ENCODE measurements at regions of chr4 and their contacts with region 1.

Region 1: GRCh38 chr4:98113012-98113411 is 30.3 kb downstream of the STPG2 start:
- DNase-seq: peak; percentile 17
- H3K4me3 ChIP-seq: no peak overlapping the region
- H3K27ac ChIP-seq: no peak overlapping the region
- H3K4me1 ChIP-seq: no peaks in the 10 kb centered on the region
- H3K27me3 ChIP-seq: peaks cover 3% of the 10 kb centered on the region
- CTCF ChIP-seq: peak; percentile 42 to 56

Region 2: DNA sequence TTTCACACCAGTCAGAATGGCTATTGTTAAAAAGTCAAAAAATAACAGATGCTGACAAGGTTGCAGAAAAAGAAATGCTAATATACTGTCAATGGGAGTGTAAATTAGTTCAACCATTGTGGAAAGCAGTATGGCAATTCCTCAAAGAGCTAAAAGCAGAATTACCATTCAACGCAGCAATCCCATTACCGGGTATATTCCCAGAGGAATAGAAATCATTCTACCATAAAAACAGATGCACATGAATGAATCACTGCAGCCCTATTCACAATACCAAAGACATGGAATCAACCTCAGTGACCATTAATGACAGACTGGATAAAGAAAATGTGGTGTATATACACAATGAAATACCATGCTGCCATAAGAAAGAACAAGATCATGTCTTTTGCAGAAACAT is 212.8 kb before region 1 on chr4:
- CTCF ChIA-PET with region 1: no interaction called
- dilution Hi-C with region 1: no loop called
- in situ Hi-C with region 1: no loop called
- intact Hi-C with region 1: no loop called
- DNase-seq: no peak
- H3K4me3 ChIP-seq: no peak overlapping the region
- H3K27ac ChIP-seq: no peak overlapping the region
- H3K4me1 ChIP-seq: no peaks in the 10 kb centered on the region
- H3K27me3 ChIP-seq: no peaks in the 10 kb centered on the region
- CTCF ChIP-seq: no peak

Region 3: DNA sequence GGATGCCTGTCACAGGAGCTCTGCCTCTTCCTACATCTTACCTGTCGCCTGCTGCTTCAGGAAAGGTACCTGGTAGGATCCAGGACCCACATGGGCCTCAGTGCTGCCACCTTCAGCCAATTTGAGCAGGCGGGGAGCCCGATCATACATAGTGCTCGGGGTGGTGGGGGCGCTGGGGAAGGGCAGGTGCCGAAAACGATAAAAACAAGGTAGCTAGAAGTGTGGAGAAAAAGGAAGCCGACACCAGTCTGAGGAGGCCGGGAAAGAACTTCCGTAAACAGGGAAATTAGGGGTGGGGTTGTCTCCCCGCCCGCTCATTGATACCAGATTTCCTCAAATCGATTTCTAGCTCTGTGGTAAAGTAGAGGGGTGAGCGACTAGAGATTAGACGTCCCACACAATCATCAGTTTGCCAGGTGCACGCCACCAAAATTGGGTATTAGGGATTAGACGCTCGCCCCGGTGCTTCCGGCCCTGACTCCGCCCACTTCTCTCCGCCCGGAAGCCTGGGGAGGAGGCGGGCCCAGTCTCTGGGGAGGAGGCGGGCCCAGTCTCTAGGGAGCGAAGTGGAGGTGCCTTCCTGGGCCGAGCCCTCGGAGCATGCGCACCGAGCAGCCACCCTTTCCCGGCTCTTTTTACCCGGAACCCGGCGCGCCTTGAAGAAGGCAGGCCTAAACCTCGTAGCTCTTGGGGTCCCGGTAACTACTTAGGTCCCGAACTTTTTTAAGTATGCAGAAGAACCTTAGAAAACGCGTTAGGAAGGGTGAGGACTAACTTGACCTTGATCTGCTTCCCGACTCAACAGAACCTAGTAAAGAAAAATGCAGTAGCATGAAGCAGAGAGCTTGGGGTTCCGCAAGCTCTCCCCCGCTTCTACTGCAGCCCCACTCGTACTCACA is 30.2 kb after region 1 on chr4 and contains the start of gene STPG2:
- CTCF ChIA-PET with region 1: interaction called, 7 read pairs
- dilution Hi-C with region 1: no loop called
- in situ Hi-C with region 1: no loop called
- intact Hi-C with region 1: loop called (anchors 1 kb)
- DNase-seq: peak; percentile 93
- H3K4me3 ChIP-seq: peak within 1 kb of the TSS; percentile 64 to 76 (median 69)
- H3K27ac ChIP-seq: peak within 1 kb of the TSS; percentile 78
- H3K4me1 ChIP-seq: peaks cover 12% of the 10 kb centered on the region
- H3K27me3 ChIP-seq: no peaks in the 10 kb centered on the region
- CTCF ChIP-seq: peak; percentile 53 to 73
- total RNA-seq, gene STPG2: 0.17 to 0.28 TPM